PC-9 (cell line): ENCODE measurements at regions of chr3 and their contacts with region 1.

Region 1: GRCh38 chr3:168620826-168621225 is 525.1 kb upstream of the GOLIM4 start:
- DNase-seq: peak in 1 of 2 experiments; percentile 18
- H3K4me3 ChIP-seq: no peak overlapping the region
- H3K27ac ChIP-seq: no peak overlapping the region
- H3K4me1 ChIP-seq: no peaks in the 10 kb centered on the region
- H3K27me3 ChIP-seq: no peaks in the 10 kb centered on the region
- CTCF ChIP-seq: peak; percentile 68

Region 2: GRCh38 chr3:168239287-168239686 is 381.5 kb before region 1 on chr3:
- CTCF ChIA-PET with region 1: no interaction called
- POLR2A ChIA-PET with region 1: no interaction called
- intact Hi-C with region 1: no loop called
- DNase-seq: no peak
- H3K4me3 ChIP-seq: no peak overlapping the region
- H3K27ac ChIP-seq: no peak overlapping the region
- H3K4me1 ChIP-seq: no peaks in the 10 kb centered on the region
- H3K27me3 ChIP-seq: no peaks in the 10 kb centered on the region
- CTCF ChIP-seq: no peak

Region 3: DNA sequence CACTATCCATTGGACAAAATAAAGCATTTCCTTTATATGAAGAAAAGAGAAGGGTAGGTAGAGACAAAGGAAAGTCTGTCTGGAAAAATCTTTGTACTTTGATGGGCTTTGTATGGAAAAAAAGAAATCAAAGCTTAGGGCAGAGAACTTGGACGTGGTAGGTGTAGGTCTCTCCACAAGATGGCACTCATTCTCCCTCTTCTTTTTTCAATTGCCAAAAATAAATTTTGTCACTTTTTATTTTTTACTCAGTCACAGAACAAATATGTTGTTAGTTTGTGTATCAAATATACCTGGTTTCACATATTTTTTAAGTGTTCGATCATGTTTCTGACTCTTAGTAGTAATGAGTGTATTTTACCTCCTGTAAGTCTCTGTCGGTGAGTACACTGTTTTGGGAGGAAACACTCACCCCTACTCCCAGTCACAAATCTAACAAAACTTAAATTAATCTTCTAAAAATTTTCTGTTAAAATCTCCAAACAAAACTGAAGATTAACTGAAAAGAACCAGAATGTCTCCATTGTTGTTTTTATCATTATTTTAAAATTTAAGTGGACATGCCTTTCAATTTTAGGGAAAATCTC is 109.3 kb before region 1 on chr3:
- CTCF ChIA-PET with region 1: interaction called, 3 read pairs
- POLR2A ChIA-PET with region 1: no interaction called
- intact Hi-C with region 1: loop called (anchors 1 kb)
- DNase-seq: no peak
- H3K4me3 ChIP-seq: no peak overlapping the region
- H3K27ac ChIP-seq: no peak overlapping the region
- H3K4me1 ChIP-seq: no peaks in the 10 kb centered on the region
- H3K27me3 ChIP-seq: no peaks in the 10 kb centered on the region
- CTCF ChIP-seq: peak; percentile 74

Region 4: GRCh38 chr3:168534761-168535160 is 86.1 kb before region 1 on chr3:
- CTCF ChIA-PET with region 1: no interaction called
- POLR2A ChIA-PET with region 1: no interaction called
- intact Hi-C with region 1: loop called (anchors 5 kb)
- DNase-seq: peak in 1 of 2 experiments; percentile 6
- H3K4me3 ChIP-seq: no peak overlapping the region
- H3K27ac ChIP-seq: no peak overlapping the region
- H3K4me1 ChIP-seq: no peaks in the 10 kb centered on the region
- H3K27me3 ChIP-seq: no peaks in the 10 kb centered on the region
- CTCF ChIP-seq: no peak